A549 (cell line): ENCODE measurements at regions of chr19 and their contacts with region 1.

Region 1: GRCh38 chr19:12983542-12984142 is 11.6 kb upstream of the NFIX start:
- DNase-seq: peak; percentile 52 to 78
- ATAC-seq: peak; percentile 72 to 77
- H3K4me3 ChIP-seq: peak overlapping the region; percentile 42
- H3K27ac ChIP-seq: peak overlapping the region; percentile 58 to 84
- H3K4me1 ChIP-seq: 0 out of 3 replicates have a peak, but pooled peaks cover 3% of the 10 kb centered on the region
- CTCF ChIP-seq: peak; percentile 83
- EP300 ChIP-seq: no peak
- POLR2A ChIP-seq: no peak
- RAD21 ChIP-seq: peak; percentile 57 to 76

Region 2: DNA sequence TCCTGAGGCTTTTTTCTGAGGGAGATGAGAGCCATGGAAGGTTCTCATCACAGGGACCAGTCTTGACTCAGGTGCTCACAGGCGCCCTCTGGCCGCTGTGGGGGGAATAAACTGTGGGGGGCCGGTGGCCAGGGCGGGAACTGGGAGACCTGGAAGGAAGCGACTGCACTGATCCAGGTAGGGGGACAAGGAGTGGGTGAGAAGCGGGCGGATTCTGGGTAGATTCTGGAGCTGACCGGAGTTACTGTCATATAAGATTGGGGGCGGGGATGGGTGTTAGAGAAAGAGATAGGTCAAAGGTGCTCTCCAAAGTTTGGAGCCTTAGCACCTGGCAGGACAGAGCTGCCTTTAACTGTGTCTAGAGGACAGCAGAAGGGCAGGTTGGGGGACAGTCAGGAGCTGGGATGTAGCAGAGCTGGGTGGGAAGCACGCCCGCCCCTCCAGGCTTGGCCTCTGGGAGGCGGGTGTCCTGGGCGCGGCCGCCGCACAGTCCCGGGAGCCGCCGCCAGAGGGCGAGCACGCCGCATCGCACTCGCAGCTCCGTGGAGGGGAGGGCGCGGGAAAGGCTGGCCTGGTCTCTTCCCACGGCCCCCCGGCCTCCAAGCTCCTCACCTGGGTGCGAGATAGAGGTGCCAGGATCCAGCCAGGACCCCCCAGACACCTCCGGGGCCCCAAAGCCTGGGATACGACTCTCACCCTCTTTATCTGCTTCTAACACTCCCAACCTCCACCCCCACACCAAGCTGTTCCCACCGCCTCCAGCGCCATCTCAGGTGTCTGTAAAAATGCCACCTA is 18.4 kb before region 1 on chr19:
- CTCF ChIA-PET with region 1: interaction called, 114 read pairs
- POLR2A ChIA-PET with region 1: no interaction called
- DNase-seq: peak; percentile 53 to 76
- ATAC-seq: peak; percentile 97 to 98
- H3K4me3 ChIP-seq: peak overlapping the region; percentile 53
- H3K27ac ChIP-seq: peak overlapping the region; percentile 91
- H3K4me1 ChIP-seq: peaks cover 11% of the 10 kb centered on the region; the same call in 1 of the 3 replicates
- CTCF ChIP-seq: peak; percentile 67
- EP300 ChIP-seq: no peak
- POLR2A ChIP-seq: no peak
- RAD21 ChIP-seq: peak; percentile 53 to 63

Region 3: GRCh38 chr19:13033819-13034611 is 50.4 kb after region 1 on chr19:
- CTCF ChIA-PET with region 1: interaction called, 23 read pairs
- POLR2A ChIA-PET with region 1: no interaction called
- DNase-seq: peak; percentile 42 to 68
- ATAC-seq: peak; percentile 84 to 94; a peak in 5 of 6 replicates
- H3K4me3 ChIP-seq: no peak overlapping the region
- H3K27ac ChIP-seq: no peak overlapping the region
- H3K4me1 ChIP-seq: peaks cover 17% of the 10 kb centered on the region
- CTCF ChIP-seq: peak; percentile 47
- EP300 ChIP-seq: no peak
- POLR2A ChIP-seq: no peak
- RAD21 ChIP-seq: peak; percentile 32 to 52

Region 4: GRCh38 chr19:13069415-13070359 is 86.0 kb after region 1 on chr19:
- CTCF ChIA-PET with region 1: interaction called, 127 read pairs
- POLR2A ChIA-PET with region 1: no interaction called
- DNase-seq: no peak
- ATAC-seq: peak; percentile 44 to 72; a peak in 5 of 6 replicates
- H3K4me3 ChIP-seq: no peak overlapping the region
- H3K27ac ChIP-seq: no peak overlapping the region
- H3K4me1 ChIP-seq: no peaks in the 10 kb centered on the region
- CTCF ChIP-seq: no peak
- EP300 ChIP-seq: no peak
- POLR2A ChIP-seq: no peak
- RAD21 ChIP-seq: no peak

Region 5: DNA sequence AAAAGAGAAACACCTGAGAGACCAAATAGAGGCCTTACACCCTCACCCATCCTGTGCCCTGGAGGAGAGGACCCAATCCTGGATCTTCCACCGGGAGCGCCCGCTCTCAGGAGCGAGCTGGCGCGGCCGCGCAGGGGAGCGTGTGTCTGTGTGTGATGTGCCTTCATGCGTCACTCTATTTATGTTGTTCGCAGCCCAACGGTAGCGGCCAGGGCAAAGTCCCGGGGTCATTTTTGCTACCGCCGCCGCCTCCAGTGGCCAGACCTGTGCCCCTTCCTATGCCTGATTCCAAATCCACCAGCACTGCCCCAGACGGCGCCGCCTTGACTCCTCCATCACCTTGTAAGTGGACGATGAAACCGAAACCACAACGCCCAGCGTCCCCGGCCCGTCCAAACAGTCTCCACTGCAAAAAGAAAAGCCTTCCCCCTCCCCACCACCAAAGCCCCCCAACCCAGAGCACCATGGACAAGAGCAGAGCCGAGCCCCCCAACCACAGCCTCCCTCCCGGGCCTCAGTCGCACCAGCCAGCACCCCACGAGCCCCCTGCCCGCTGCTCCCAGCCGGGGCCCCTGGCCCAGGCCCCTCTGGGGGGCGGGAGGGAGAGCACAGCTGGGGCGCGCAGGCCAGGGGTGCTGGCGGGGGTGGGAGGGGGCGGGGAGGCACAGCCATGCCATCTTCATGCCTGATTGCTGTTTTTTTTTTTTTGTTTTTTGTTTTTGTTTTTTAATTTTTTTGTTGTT is 104.3 kb after region 1 on chr19:
- CTCF ChIA-PET with region 1: interaction called, 309 read pairs
- POLR2A ChIA-PET with region 1: no interaction called
- DNase-seq: no peak
- ATAC-seq: no peak
- H3K4me3 ChIP-seq: no peak overlapping the region
- H3K27ac ChIP-seq: no peak overlapping the region
- H3K4me1 ChIP-seq: peaks cover 23% of the 10 kb centered on the region
- CTCF ChIP-seq: no peak
- EP300 ChIP-seq: no peak
- POLR2A ChIP-seq: no peak
- RAD21 ChIP-seq: no peak

Region 6: GRCh38 chr19:13099073-13099999 is 115.7 kb after region 1 on chr19:
- CTCF ChIA-PET with region 1: interaction called, 309 read pairs
- POLR2A ChIA-PET with region 1: no interaction called
- DNase-seq: no peak
- ATAC-seq: no peak
- H3K4me3 ChIP-seq: no peak overlapping the region
- H3K27ac ChIP-seq: no peak overlapping the region
- H3K4me1 ChIP-seq: peaks cover 22% of the 10 kb centered on the region
- CTCF ChIP-seq: no peak
- EP300 ChIP-seq: no peak
- POLR2A ChIP-seq: no peak
- RAD21 ChIP-seq: no peak